ENCODE measurements at regions of chr19 and their contacts with region 1.

Region 1: GRCh38 chr19:43668406-43669158 is 1.4 kb downstream of the PLAUR start:
- DNase-seq: peak; percentile 95 to 99 (median 97)
- H3K4me3 ChIP-seq: peak overlapping the region; percentile 68 to 76
- H3K4me3 Mint-ChIP-seq: peak overlapping the region; percentile 86 to 95 (median 92)
- H3K27ac ChIP-seq: peak overlapping the region; percentile 61
- H3K27ac Mint-ChIP-seq: peak overlapping the region; percentile 84 to 97 (median 95)
- H3K4me1 ChIP-seq: peaks cover 36% of the 10 kb centered on the region
- H3K4me1 Mint-ChIP-seq: peaks cover 32 to 58% (median 42%) of the 10 kb centered on the region in 4 donors
- H3K27me3 ChIP-seq: no peaks in the 10 kb centered on the region
- H3K27me3 Mint-ChIP-seq: no peaks in the 10 kb centered on the region

Region 2: DNA sequence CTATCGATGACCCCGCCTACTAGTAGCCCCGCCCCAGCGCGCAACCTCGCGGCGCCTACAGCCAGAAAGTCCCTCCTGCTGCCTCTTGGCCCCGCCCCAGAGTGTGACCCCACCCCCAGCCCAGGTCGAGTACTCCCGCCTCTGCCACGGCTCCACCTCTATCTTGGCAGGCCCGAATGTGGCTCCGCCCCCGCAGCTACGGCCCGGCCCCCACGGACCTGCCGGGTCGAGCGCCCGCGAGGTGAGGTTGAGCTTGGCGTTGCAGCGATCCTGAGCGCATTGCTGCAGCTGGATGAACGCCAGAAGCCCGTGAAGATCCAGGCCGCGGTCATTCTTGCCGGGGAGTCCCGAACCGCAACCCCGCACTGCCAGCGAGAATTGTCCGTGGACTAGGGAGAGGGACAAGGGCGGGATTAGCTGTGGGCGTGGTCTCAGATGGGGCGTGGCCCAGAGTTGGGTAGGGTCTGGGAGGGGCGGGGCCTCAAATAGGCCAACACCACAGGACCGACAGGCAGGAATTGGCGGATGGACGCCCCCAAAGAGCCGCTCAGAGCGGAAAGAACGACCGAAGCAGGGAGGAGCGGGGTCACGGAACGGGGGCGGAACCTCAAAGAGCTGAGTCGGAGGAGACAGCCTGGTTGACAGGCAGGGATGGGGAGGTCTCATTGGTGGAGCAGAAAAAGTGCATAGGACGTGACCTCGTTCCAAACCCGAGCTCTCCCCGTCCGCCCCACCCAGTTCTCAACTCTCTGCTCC is 205.0 kb before region 1 on chr19:
- CTCF ChIA-PET with region 1: interaction called, 4 read pairs
- POLR2A ChIA-PET with region 1: interaction called, 14 read pairs
- intact Hi-C with region 1: loop called (anchors 1 kb)
- DNase-seq: peak; percentile 98 to 100 (median 98)
- H3K4me3 ChIP-seq: peak overlapping the region; percentile 79 to 98
- H3K4me3 Mint-ChIP-seq: peak overlapping the region; percentile 90 to 98 (median 94)
- H3K27ac ChIP-seq: peak overlapping the region; percentile 80
- H3K27ac Mint-ChIP-seq: peak overlapping the region; percentile 95 to 100 (median 99)
- H3K4me1 ChIP-seq: peaks cover 34% of the 10 kb centered on the region
- H3K4me1 Mint-ChIP-seq: peaks cover 25 to 64% (median 43%) of the 10 kb centered on the region in 4 donors
- H3K27me3 ChIP-seq: no peaks in the 10 kb centered on the region
- H3K27me3 Mint-ChIP-seq: no peaks in the 10 kb centered on the region

Region 3: DNA sequence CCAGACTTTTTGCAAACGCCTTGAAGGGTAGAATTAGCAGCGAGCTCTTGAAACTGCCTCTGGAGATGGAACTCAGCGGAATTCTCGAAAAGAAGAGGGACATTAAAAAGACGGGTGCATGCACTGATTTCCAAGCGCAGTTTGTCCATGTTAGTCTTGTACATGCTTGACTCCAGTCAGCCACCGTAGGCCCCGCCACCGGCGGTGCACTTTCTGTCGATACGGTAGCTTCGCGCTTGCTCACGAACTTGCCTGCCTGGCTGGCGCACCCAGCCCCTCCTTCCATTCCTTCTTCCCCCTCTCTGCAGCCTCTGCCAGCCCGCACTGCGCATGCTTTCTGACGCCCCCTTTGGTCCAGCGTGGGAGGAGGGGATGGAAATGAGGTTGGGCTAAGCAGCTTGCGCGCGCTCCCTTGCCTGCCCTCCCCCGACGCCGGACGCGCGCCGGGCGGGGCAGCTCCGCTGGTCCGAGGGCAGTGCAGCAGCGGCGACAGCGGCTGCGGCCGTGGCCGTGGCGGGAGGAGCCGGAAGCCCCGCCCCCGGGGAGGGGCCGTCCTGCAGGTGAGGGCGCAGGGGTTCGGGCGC is 135.5 kb before region 1 on chr19 and contains the start of gene ZNF575:
- CTCF ChIA-PET with region 1: interaction called, 3 read pairs
- POLR2A ChIA-PET with region 1: interaction called, 12 read pairs
- intact Hi-C with region 1: no loop called
- DNase-seq: peak; percentile 82 to 88 (median 84)
- H3K4me3 ChIP-seq: peak within 1 kb of the TSS; percentile 69 to 88
- H3K4me3 Mint-ChIP-seq: peak within 1 kb of the TSS; percentile 91 to 99 (median 98)
- H3K27ac ChIP-seq: peak within 1 kb of the TSS; percentile 53
- H3K27ac Mint-ChIP-seq: peak within 1 kb of the TSS; percentile 95 to 99 (median 98)
- H3K4me1 ChIP-seq: peaks cover 17% of the 10 kb centered on the region
- H3K4me1 Mint-ChIP-seq: peaks cover 10 to 22% (median 15%) of the 10 kb centered on the region in 4 donors
- H3K27me3 ChIP-seq: no peaks in the 10 kb centered on the region
- H3K27me3 Mint-ChIP-seq: no peaks in the 10 kb centered on the region
- total RNA-seq, gene ZNF575: 11.0 to 11.8 TPM

Region 4: GRCh38 chr19:43619262-43620060 is 49.1 kb before region 1 on chr19 and contains the start of gene ZNF428:
- CTCF ChIA-PET with region 1: interaction called, 4 read pairs
- POLR2A ChIA-PET with region 1: interaction called, 5 read pairs
- intact Hi-C with region 1: loop called (anchors 1 kb)
- DNase-seq: peak; percentile 85 to 88 (median 88)
- H3K4me3 ChIP-seq: peak within 1 kb of the TSS; percentile 90 to 97
- H3K4me3 Mint-ChIP-seq: peak within 1 kb of the TSS; percentile 96 to 98 (median 98)
- H3K27ac ChIP-seq: peak within 1 kb of the TSS; percentile 77
- H3K27ac Mint-ChIP-seq: peak within 1 kb of the TSS; percentile 95 to 99 (median 98)
- H3K4me1 ChIP-seq: peaks cover 29% of the 10 kb centered on the region
- H3K4me1 Mint-ChIP-seq: peaks cover 11 to 40% (median 27%) of the 10 kb centered on the region in 4 donors
- H3K27me3 ChIP-seq: no peaks in the 10 kb centered on the region
- H3K27me3 Mint-ChIP-seq: no peaks in the 10 kb centered on the region
- total RNA-seq, gene ZNF428: 27.7 to 28.2 TPM

Region 5: GRCh38 chr19:43754503-43755255 is 86.1 kb after region 1 on chr19 and contains the start of gene SMG9:
- CTCF ChIA-PET with region 1: interaction called, 11 read pairs
- POLR2A ChIA-PET with region 1: interaction called, 28 read pairs
- intact Hi-C with region 1: loop called (anchors 1 kb)
- DNase-seq: peak; percentile 98 to 100 (median 99)
- H3K4me3 ChIP-seq: peak within 1 kb of the TSS; percentile 94 to 98
- H3K4me3 Mint-ChIP-seq: peak within 1 kb of the TSS; percentile 90 to 97 (median 96)
- H3K27ac ChIP-seq: peak within 1 kb of the TSS; percentile 93
- H3K27ac Mint-ChIP-seq: peak within 1 kb of the TSS; percentile 96 to 99 (median 99)
- H3K4me1 ChIP-seq: peaks cover 38% of the 10 kb centered on the region
- H3K4me1 Mint-ChIP-seq: peaks cover 22 to 63% (median 41%) of the 10 kb centered on the region in 4 donors
- H3K27me3 ChIP-seq: no peaks in the 10 kb centered on the region
- H3K27me3 Mint-ChIP-seq: no peaks in the 10 kb centered on the region
- total RNA-seq, gene SMG9: 57.6 to 57.9 TPM

Region 6: DNA sequence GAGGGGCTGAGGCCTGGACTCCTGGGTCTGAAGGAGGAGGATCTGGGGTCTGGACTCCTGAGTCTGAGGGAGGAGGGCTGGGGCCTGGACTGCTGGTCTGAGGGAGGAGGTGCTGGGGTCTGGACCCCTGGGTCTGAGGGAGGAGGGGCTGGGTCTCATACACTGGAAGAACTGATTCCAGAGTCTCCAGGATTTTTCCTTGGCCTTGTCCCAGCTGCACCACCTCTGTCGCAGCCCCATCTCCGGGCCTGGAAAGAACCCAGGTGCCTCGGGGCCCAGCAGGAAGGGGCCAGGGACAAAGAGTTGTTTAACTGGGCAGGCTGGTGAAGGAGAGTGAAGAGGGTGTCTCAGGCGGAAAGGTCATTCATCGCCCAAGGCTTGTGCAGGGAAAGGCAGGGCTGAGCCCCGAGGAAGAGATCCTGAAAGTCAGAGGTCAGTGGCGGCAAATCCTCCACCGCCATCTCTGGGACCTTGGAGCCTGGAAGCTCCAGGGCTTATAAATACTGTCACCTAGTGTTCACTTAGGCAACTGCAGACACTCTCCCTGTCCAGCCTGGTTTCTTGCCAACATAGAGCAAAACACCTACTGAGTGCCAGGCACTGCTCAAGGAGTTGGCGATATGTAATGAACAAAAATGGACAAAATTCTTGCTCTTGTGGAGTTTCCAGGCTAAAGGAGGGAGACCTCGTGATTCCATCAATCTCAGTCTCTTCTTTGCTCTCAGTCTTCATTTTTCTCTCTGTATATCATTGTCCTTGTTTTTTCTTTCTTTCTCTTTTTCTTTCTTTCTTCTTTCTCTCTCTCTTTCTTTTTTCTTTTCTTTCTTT is 116.6 kb after region 1 on chr19:
- CTCF ChIA-PET with region 1: interaction called, 13 read pairs
- POLR2A ChIA-PET with region 1: interaction called, 5 read pairs
- intact Hi-C with region 1: loop called (anchors 2 kb)
- DNase-seq: peak; percentile 59 to 72 (median 62)
- H3K4me3 ChIP-seq: no peak overlapping the region
- H3K4me3 Mint-ChIP-seq: peak overlapping the region in 7 of 8 donors; percentile 73 to 84 (median 79)
- H3K27ac ChIP-seq: peak overlapping the region; percentile 46
- H3K27ac Mint-ChIP-seq: peak overlapping the region; percentile 77 to 96 (median 93)
- H3K4me1 ChIP-seq: peaks cover 47% of the 10 kb centered on the region
- H3K4me1 Mint-ChIP-seq: peaks cover 30 to 52% (median 37%) of the 10 kb centered on the region in 4 donors
- H3K27me3 ChIP-seq: no peaks in the 10 kb centered on the region
- H3K27me3 Mint-ChIP-seq: peaks cover 0 to 2% of the 10 kb centered on the region in 2 donors

Measured in CD4-positive, alpha-beta memory T cell (primary cell).